Tibial artery (tissue), 4 donors: ENCODE measurements at regions of chr19 and their contacts with region 1.

Region 1: DNA sequence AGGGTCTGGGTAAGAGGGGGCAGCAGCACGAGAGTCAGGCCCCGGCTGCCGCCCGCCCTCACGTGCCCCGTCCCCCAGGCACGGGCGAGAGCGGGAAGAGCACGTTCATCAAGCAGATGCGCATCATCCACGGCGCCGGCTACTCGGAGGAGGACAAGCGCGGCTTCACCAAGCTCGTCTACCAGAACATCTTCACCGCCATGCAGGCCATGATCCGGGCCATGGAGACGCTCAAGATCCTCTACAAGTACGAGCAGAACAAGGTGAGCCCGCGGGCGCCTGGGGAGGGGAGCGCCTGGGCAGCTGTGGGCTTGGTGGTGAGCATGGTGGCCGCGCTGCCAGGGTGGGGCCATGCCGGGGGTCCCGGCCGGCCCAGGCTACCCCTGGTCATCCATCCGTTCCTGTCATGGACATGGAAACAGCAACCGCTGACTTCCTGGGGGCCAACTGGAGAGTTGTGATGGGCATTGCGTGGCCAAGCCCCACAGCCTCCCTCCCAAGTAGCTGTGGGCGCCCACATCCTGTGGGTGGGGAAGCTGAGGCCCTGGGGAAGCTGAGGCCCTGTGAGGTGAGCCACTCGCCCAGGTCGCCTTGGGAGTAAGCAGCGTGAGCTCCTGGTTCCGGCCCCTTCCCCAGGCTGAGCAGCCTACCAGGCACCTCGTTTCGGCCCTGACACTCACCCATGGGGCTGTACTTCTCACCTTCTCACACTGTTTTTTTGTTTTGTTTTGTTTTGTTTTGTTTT is 16.1 kb downstream of the GNA11 start:
- DNase-seq: no peak
- H3K4me3 ChIP-seq: no peak overlapping the region
- H3K27ac ChIP-seq: no peak overlapping the region
- H3K4me1 ChIP-seq: peaks cover 0 to 19% (median 7%) of the 10 kb centered on the region in 4 donors
- H3K27me3 ChIP-seq: no peaks in the 10 kb centered on the region
- CTCF ChIP-seq: no peak

Region 2: DNA sequence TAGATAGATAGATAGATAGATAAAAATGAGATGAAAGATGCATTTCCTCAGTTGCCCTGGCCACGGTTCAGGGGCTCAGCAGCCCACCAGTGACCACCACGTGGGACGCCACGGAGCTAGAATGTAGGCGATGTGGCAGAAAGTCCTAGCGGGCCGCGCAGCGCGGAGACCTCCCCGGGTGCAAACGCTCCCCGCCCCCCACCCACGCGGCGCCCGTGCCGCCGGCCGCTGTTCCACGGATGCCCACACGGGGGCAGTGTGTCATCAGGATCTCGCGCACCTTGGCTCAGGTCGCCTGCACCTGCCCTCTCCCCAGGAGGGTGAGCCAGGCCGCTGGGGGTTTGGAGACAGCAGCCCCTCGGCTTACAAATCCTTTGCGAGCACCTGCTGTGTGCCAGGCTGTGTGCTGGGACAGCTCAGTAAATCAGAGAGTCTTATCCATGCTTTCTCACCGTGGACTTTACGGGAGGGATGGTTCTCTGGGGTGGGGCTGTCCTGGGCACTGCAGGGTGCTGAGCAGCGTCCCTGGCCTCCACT is 34.3 kb before region 1 on chr19:
- intact Hi-C with region 1: loop called (anchors 5 kb)
- DNase-seq: no peak
- H3K4me3 ChIP-seq: no peak overlapping the region
- H3K27ac ChIP-seq: no peak overlapping the region
- H3K4me1 ChIP-seq: peaks cover 0 to 21% (median 11%) of the 10 kb centered on the region in 4 donors
- H3K27me3 ChIP-seq: no peaks in the 10 kb centered on the region
- CTCF ChIP-seq: peak; percentile 93

Region 3: GRCh38 chr19:3176603-3177501 is 66.6 kb after region 1 on chr19:
- intact Hi-C with region 1: no loop called
- DNase-seq: no peak
- H3K4me3 ChIP-seq: no peak overlapping the region
- H3K27ac ChIP-seq: no peak overlapping the region
- H3K4me1 ChIP-seq: no peaks in the 10 kb centered on the region
- H3K27me3 ChIP-seq: peaks cover 0 to 15% of the 10 kb centered on the region in 2 donors
- CTCF ChIP-seq: no peak